ENCODE measurements at regions of chr3 and their contacts with region 1.

Region 1: DNA sequence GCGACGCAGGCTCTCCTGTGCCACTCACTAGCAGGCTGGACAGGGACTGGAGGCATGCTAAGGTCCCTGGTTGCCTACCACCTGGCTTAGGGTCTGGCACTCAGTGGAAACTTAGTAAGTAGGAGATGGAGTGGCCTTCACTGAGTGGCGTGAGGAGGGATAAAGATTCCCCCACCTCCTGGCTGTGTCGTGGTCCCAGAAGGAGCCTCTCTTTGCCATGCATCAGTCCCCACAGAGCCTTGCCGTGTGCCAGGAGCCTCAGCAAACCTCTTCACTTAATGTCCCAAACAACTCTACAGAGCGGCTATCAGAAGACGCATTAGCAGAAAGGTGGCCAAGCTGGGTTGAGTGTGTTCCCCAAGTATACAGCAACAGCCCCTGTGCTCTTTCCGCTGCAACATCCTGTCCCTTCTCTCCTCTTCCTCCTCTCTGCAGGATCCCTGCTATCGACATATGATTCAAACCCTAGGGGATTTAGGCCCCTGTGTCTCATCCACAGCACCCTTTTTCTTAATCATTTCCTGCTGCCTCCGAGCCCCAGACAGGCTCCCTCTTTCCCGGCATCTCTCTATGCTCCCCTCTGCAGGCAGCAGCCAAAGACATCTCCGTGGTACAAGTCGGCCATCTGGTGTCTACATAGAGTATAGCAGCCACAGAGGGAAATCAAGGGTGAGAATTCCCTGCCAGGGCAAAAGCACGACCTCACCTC is 66.7 kb downstream of the SLC6A1 start:
- DNase-seq: peak; percentile 44 to 77 (median 64)
- H3K4me3 ChIP-seq: no peak overlapping the region
- H3K27ac ChIP-seq: no peak overlapping the region
- H3K4me1 ChIP-seq: no peaks in the 10 kb centered on the region
- H3K27me3 ChIP-seq: peaks cover 7% of the 10 kb centered on the region
- CTCF ChIP-seq: peak; percentile 57 to 79 (median 74)
- POLR2A ChIP-seq: no peak

Region 2: GRCh38 chr3:10758304-10759061 is 300.8 kb before region 1 on chr3:
- intact Hi-C with region 1: loop called (anchors 5 to 10 kb)
- DNase-seq: peak; percentile 48 to 76 (median 61)
- H3K4me3 ChIP-seq: no peak overlapping the region
- H3K27ac ChIP-seq: no peak overlapping the region
- H3K4me1 ChIP-seq: no peaks in the 10 kb centered on the region
- H3K27me3 ChIP-seq: peaks cover 5% of the 10 kb centered on the region
- CTCF ChIP-seq: peak; percentile 51 to 85 (median 72)
- POLR2A ChIP-seq: no peak

Region 3: GRCh38 chr3:10945683-10946287 is 113.5 kb before region 1 on chr3:
- intact Hi-C with region 1: loop called (anchors 5 kb)
- DNase-seq: peak in 6 of 7 donors; percentile 43 to 71 (median 58)
- H3K4me3 ChIP-seq: no peak overlapping the region
- H3K27ac ChIP-seq: no peak overlapping the region
- H3K4me1 ChIP-seq: no peaks in the 10 kb centered on the region
- H3K27me3 ChIP-seq: peaks cover 9% of the 10 kb centered on the region
- CTCF ChIP-seq: peak; percentile 62 to 81 (median 70)
- POLR2A ChIP-seq: no peak

Region 4: GRCh38 chr3:11260460-11260859 is 201.2 kb after region 1 on chr3:
- intact Hi-C with region 1: no loop called
- DNase-seq: no peak
- H3K4me3 ChIP-seq: no peak overlapping the region
- H3K27ac ChIP-seq: no peak overlapping the region
- H3K4me1 ChIP-seq: no peaks in the 10 kb centered on the region
- H3K27me3 ChIP-seq: no peaks in the 10 kb centered on the region
- CTCF ChIP-seq: no peak
- POLR2A ChIP-seq: no peak

Region 5: DNA sequence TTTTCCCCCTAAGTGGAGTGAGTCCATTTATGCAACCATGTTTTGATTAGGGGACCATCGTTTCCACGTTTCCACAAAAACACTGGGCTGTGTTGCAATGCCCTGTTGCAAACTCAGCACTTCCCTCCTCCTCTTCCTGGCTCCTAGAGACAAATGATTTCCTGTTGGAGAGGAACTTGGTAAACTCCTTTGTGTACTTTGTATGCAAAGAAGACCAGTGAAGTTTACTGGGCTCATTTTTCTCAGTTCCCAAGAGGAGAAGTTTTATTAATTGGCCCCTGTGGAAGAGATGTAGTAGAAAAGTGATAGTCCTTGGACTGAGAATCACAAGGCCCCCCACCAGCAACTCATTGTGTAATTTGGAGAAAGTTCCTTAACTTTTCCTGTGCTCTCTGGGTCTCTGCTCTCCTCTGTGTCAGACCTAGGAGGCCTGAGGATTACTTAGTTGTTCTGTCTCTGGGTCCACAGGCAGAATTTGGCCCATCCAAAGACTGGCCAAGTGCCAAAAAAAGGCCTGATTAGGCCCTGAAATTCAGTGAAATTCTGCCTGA is 308.0 kb after region 1 on chr3:
- intact Hi-C with region 1: no loop called
- DNase-seq: peak in 6 of 7 donors; percentile 36 to 73 (median 49)
- H3K4me3 ChIP-seq: no peak overlapping the region
- H3K27ac ChIP-seq: peak overlapping the region; percentile 10 to 78 (median 34)
- H3K4me1 ChIP-seq: peaks cover 12 to 19% of the 10 kb centered on the region in 2 donors
- H3K27me3 ChIP-seq: no peaks in the 10 kb centered on the region
- CTCF ChIP-seq: no peak
- POLR2A ChIP-seq: no peak

Measured in adrenal gland (tissue), 19 donors.